ENCODE measurements at regions of chr13 and their contacts with region 1.

Region 1: GRCh38 chr13:112942689-112943308 is 26.2 kb upstream of the MCF2L start:
- DNase-seq: peak; percentile 96 to 99 (median 98)
- ATAC-seq: peak; percentile 95 to 96
- H3K4me3 ChIP-seq: peak overlapping the region; percentile 68
- H3K27ac ChIP-seq: no peak overlapping the region
- H3K4me1 ChIP-seq: no peaks in the 10 kb centered on the region
- H3K27me3 ChIP-seq: no peaks in the 10 kb centered on the region

Region 2: DNA sequence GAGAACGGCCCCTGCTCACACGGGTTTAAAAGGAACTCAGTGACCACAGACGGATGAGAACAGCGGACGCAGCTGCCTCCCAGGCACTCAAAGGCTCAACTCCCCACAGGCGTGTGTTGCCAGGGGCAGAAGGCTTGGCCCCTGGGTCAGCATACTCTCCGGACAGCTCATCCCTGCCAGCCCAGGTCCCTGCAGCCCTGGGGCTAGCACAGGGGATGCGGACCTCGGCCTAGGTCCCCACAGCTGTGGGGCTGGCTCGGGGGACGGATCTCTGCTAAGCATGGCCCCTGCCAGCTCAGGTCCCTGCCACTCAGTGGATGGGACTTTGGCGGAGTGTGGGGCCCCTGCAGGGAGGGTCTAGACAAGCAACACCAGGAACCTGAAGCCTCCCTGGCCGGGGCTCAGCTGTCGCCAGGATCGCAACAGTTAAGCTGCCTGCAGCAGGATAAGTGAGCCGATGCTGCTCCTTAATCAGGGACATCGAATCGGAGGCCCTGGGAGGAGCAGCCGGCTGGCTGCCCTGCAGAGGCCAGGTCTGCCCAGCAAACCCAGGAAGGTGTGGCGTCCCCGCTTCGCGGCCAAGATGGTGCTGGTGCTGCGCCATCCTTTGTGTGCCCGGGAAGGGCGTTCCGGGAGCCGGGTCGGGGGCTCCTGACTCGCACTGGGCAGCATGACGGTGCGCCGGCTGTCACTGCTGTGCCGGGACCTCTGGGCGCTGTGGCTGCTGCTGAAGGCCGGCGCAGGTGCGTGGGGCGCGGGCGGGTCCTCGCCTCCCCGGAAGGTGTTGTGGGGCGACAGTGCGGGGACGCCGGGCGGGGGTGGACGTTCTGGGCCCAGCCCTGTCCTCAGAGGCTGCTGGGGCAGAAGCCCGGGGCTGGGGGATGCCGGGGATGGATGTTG is 58.7 kb after region 1 on chr13:
- intact Hi-C with region 1: loop called in 2 of 4 experiments (anchors 10 kb)
- DNase-seq: peak in 2 of 3 donors; percentile 40 to 81
- ATAC-seq: peak; percentile 48 to 63
- H3K4me3 ChIP-seq: peak overlapping the region; percentile 4
- H3K27ac ChIP-seq: no peak overlapping the region
- H3K4me1 ChIP-seq: no peaks in the 10 kb centered on the region
- H3K27me3 ChIP-seq: no peaks in the 10 kb centered on the region

Measured in right cardiac atrium (tissue), 5 donors.